Caco-2 (cell line): ENCODE measurements at regions of chr5 and their contacts with region 1.

Region 1: GRCh38 chr5:65624571-65625555 is at the starts of genes SHLD3 and TRAPPC13:
- DNase-seq: peak; percentile 80 to 87
- H3K4me3 ChIP-seq: peak within 1 kb of the TSS; percentile 54
- H3K4me3 Mint-ChIP-seq: peak within 1 kb of the TSS; percentile 100
- H3K27ac Mint-ChIP-seq: peak within 1 kb of the TSS; percentile 96
- H3K4me1 ChIP-seq: peaks cover 5% of the 10 kb centered on the region; the same call in 1 of the 2 replicates
- H3K4me1 Mint-ChIP-seq: peaks cover 6% of the 10 kb centered on the region
- H3K27me3 ChIP-seq: no peaks in the 10 kb centered on the region
- H3K27me3 Mint-ChIP-seq: no peaks in the 10 kb centered on the region
- CTCF ChIP-seq: no peak
- total RNA-seq, gene SHLD3: 4.3 and 4.7 TPM in 2 replicates
- total RNA-seq, gene TRAPPC13: 18.7 and 19.6 TPM in 2 replicates

Region 2: DNA sequence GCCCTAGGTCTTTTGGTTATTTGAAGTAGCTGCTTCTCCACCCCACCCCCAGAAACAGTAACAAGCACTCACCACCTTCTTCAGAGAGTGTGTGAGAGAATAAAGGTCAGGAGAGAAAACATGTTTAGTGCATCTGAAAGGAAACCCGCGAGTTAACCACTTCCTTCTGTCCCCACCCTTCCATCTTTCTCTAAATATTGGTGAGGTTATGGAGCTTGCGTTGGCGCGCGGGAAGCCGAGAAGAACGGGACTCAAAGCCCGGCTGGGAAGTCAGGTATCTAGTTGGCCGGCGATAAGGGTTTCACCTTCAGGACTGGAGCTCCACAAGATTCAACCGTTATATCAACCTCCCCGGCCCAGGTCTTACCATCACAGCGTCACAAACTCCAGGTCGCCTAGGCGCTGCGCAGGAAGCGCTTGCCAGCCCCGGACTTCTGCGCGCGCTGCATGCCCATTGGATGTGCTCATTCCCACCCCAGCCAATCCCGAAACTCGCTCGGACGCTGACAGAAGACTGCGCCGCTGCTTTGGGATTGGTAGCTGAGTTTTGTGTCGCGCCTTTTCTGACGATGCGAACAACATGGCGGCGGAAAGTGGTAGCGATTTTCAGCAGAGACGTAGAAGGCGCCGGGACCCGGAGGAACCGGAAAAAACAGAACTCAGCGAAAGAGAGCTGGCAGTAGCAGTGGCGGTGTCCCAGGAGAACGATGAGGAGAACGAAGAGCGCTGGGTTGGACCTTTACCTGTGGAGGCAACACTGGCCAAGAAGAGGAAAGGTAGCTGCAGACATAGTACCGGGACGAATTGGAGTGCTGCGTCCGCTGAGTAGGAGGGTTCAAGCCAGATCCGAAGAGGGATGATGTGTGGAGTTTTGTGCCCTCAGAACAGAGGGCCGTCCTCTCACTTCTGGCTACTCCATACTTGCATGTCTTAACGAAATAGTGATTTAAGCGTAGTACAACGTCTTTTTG is 61.8 kb before region 1 on chr5 and contains the starts of genes CENPK and PPWD1:
- CTCF ChIA-PET with region 1: no interaction called
- POLR2A ChIA-PET with region 1: interaction called, 6 read pairs
- intact Hi-C with region 1: loop called (anchors 1 kb)
- DNase-seq: peak; percentile 96 to 97
- H3K4me3 ChIP-seq: peak within 1 kb of the TSS; percentile 91
- H3K4me3 Mint-ChIP-seq: peak within 1 kb of the TSS; percentile 86
- H3K27ac Mint-ChIP-seq: peak within 1 kb of the TSS; percentile 95
- H3K4me1 ChIP-seq: peaks cover 5% of the 10 kb centered on the region; the same call in 1 of the 2 replicates
- H3K4me1 Mint-ChIP-seq: peaks cover 15% of the 10 kb centered on the region
- H3K27me3 ChIP-seq: no peaks in the 10 kb centered on the region
- H3K27me3 Mint-ChIP-seq: no peaks in the 10 kb centered on the region
- CTCF ChIP-seq: no peak
- total RNA-seq, gene CENPK: 56.4 TPM in 2 replicates
- total RNA-seq, gene PPWD1: 44.5 and 47.0 TPM in 2 replicates

Region 3: GRCh38 chr5:65611524-65611923 is 13.3 kb before region 1 on chr5:
- CTCF ChIA-PET with region 1: interaction called, 3 read pairs
- POLR2A ChIA-PET with region 1: interaction called, 6 read pairs
- intact Hi-C with region 1: loop called (anchors 1 kb)
- DNase-seq: peak; percentile 81 to 86
- H3K4me3 ChIP-seq: no peak overlapping the region
- H3K4me3 Mint-ChIP-seq: peak overlapping the region; percentile 49
- H3K27ac Mint-ChIP-seq: peak overlapping the region; percentile 56
- H3K4me1 ChIP-seq: peaks cover 34% of the 10 kb centered on the region
- H3K4me1 Mint-ChIP-seq: peaks cover 25% of the 10 kb centered on the region
- H3K27me3 ChIP-seq: no peaks in the 10 kb centered on the region
- H3K27me3 Mint-ChIP-seq: no peaks in the 10 kb centered on the region
- CTCF ChIP-seq: no peak

Region 4: GRCh38 chr5:65651144-65651543 is 26.3 kb after region 1 on chr5:
- CTCF ChIA-PET with region 1: no interaction called
- POLR2A ChIA-PET with region 1: no interaction called
- intact Hi-C with region 1: loop called (anchors 1 kb)
- DNase-seq: peak; percentile 72 to 83
- H3K4me3 ChIP-seq: no peak overlapping the region
- H3K4me3 Mint-ChIP-seq: peak overlapping the region; percentile 41
- H3K27ac Mint-ChIP-seq: peak overlapping the region; percentile 48
- H3K4me1 ChIP-seq: peaks cover 18% of the 10 kb centered on the region
- H3K4me1 Mint-ChIP-seq: peaks cover 17% of the 10 kb centered on the region
- H3K27me3 ChIP-seq: no peaks in the 10 kb centered on the region
- H3K27me3 Mint-ChIP-seq: no peaks in the 10 kb centered on the region
- CTCF ChIP-seq: no peak

Region 5: DNA sequence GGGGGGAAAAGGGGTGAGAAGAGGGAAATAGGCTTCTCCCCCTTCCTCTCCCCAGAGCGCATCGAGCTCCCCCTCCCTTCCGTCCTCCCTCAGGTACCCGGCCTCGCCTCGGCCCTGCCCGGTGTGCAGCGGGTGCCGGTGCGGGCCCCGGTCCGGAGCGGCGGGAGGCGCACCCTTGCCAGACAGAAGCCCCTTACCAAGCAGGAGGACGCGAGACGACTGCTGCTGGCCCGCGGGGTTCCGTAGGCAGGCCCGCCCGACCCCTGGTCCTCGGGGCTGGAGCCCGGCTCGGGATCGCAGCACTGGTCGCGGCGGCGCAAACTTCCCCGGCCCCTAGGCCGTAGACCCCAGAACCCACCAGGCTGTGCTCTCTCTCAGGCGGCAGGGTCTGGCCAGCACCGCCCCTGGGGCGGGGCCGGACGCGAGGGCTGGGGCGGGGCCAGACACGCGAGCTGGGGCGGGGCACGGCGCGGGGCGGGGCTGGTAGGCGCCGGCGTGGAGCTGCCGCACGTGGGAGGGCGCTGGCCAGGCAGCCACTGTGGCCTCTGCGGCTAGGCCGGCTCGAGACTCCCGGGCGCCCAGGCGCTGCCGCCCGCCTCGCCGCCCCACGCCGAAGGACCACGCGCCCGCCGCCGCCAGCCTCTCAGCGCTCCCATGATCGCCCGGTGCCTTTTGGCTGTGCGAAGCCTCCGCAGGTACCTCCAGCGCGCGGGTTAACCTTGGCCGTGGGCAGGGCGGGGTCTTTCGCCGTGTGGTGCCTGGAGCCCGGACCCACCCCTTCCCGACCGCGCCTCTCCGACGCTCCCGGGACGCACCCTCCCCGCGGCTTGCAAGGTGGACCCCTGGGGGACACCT is 97.1 kb after region 1 on chr5 and contains the starts of genes NLN and SGTB:
- CTCF ChIA-PET with region 1: no interaction called
- POLR2A ChIA-PET with region 1: no interaction called
- intact Hi-C with region 1: loop called (anchors 5 kb)
- DNase-seq: peak; percentile 82 to 92
- H3K4me3 ChIP-seq: peak within 1 kb of the TSS; percentile 98
- H3K4me3 Mint-ChIP-seq: peak within 1 kb of the TSS; percentile 80
- H3K27ac Mint-ChIP-seq: peak within 1 kb of the TSS; percentile 77
- H3K4me1 ChIP-seq: peaks cover 14% of the 10 kb centered on the region
- H3K4me1 Mint-ChIP-seq: peaks cover 11% of the 10 kb centered on the region
- H3K27me3 ChIP-seq: no peaks in the 10 kb centered on the region
- H3K27me3 Mint-ChIP-seq: no peaks in the 10 kb centered on the region
- CTCF ChIP-seq: no peak
- total RNA-seq, gene NLN: 34.8 and 36.0 TPM in 2 replicates
- total RNA-seq, gene SGTB: 12.0 and 13.0 TPM in 2 replicates